ENCODE measurements at regions of chrX and their contacts with region 1.

Region 1: GRCh38 chrX:48083212-48083611 is 11.8 kb upstream of the ZNF630 start:
- DNase-seq: peak; percentile 62
- ATAC-seq: peak; percentile 81
- H3K4me3 Mint-ChIP-seq: no peak overlapping the region
- H3K27ac Mint-ChIP-seq: no peak overlapping the region
- H3K4me1 Mint-ChIP-seq: peaks cover 2% of the 10 kb centered on the region
- H3K27me3 Mint-ChIP-seq: no peaks in the 10 kb centered on the region

Region 2: GRCh38 chrX:48475774-48476577 is 392.8 kb after region 1 on chrX and contains the start of gene FTSJ1:
- CTCF ChIA-PET with region 1: interaction called, 10 read pairs
- POLR2A ChIA-PET with region 1: no interaction called
- DNase-seq: peak; percentile 93
- ATAC-seq: peak; percentile 94
- H3K4me3 Mint-ChIP-seq: peak within 1 kb of the TSS; percentile 94
- H3K27ac Mint-ChIP-seq: peak within 1 kb of the TSS; percentile 92
- H3K4me1 Mint-ChIP-seq: peaks cover 46% of the 10 kb centered on the region
- H3K27me3 Mint-ChIP-seq: no peaks in the 10 kb centered on the region
- total RNA-seq, gene FTSJ1: 64.9 to 72.0 TPM

Region 3: DNA sequence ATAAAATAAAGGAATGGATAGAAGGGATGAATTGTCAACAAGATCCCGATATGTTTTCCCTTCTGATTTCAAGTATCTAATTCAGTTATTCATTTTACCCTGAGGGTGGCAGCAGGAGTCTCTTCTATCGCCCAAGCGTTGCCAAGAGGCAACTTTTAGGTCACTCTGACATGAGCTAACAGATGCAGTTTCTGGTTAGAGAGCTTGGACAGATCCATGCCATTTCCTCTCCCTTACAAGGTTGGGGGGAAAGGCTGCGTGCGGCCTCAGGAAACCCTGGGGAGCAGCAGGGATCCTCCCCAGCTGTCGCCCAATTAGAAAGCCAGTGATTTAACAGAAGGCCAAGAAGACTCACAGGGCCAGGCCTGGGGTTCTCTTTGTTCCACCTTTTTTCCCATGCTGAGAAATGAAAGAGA is 565.1 kb after region 1 on chrX:
- CTCF ChIA-PET with region 1: no interaction called
- POLR2A ChIA-PET with region 1: no interaction called
- DNase-seq: peak; percentile 46
- ATAC-seq: peak; percentile 58
- H3K4me3 Mint-ChIP-seq: no peak overlapping the region
- H3K27ac Mint-ChIP-seq: no peak overlapping the region
- H3K4me1 Mint-ChIP-seq: peaks cover 5% of the 10 kb centered on the region
- H3K27me3 Mint-ChIP-seq: no peaks in the 10 kb centered on the region

Measured in activated CD8-positive, alpha-beta T cell treated with anti-CD3 and anti-CD28 coated beads, Interleukin-2, amount 10 ng/mL, durations not matched to agents 7 days and 5 days (primary cell).